Activated CD4-positive, alpha-beta T cell treated with anti-CD3 and anti-CD28 coated beads, Interleukin-2, amount 10 ng/mL, durations not matched to agents 24 days and 14 days (primary cell): ENCODE measurements at regions of chr12 and their contacts with region 1.

Region 1: GRCh38 chr12:109093022-109093918 is at the start of gene ALKBH2:
- DNase-seq: peak; percentile 98
- H3K4me3 Mint-ChIP-seq: peak within 1 kb of the TSS; percentile 82
- H3K27ac Mint-ChIP-seq: peak within 1 kb of the TSS; percentile 84
- H3K4me1 Mint-ChIP-seq: peaks cover 40% of the 10 kb centered on the region
- H3K27me3 Mint-ChIP-seq: no peaks in the 10 kb centered on the region
- total RNA-seq, gene ALKBH2: 44.8 and 46.2 TPM in 2 replicates

Region 2: DNA sequence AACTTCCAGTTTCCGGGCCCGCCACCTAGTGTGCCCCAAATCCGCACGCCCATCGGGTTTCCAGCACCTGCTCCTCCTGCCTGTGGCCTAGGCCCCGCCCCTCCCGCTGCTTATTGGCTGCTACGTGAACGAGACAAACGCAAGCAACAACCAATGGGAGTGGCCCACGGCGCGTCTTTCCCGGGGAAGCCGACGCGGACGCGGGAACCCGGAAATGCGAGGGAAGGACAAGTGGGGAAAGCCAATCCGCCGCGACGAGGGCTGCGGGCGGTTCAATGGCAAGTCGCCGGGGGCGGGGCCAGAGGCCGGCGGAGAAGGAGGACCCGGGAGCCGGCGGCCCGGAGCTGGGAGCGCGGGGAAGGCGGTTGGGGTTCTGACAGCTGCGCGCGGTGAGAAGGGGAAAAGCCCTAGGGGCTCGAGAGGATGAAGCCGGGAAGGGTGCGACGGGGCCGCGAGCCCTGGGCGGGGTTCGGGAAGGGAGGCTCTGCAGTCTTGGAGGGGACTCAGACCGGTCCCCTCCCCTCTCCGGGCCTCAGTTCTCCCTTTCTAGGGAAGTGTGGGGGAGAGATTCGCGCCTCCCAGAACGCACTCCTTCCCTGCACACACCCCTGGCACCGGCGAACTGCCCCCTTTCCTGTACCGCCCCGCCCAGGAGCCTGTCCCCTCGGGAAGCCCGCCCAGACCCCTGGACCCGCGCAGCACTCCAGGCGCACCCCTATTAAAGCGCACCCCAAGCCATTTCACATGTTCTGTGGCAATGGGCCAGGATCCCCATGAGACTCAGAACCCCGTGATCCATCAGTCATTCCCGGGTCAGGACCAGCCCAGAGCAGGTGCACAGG is 578.1 kb before region 1 on chr12 and contains the start of gene FICD:
- intact Hi-C with region 1: loop called (anchors 5 kb)
- DNase-seq: peak; percentile 100
- H3K4me3 Mint-ChIP-seq: peak within 1 kb of the TSS; percentile 94
- H3K27ac Mint-ChIP-seq: peak within 1 kb of the TSS; percentile 84
- H3K4me1 Mint-ChIP-seq: peaks cover 31% of the 10 kb centered on the region
- H3K27me3 Mint-ChIP-seq: no peaks in the 10 kb centered on the region
- total RNA-seq, gene FICD: 5.9 and 6.6 TPM in 2 replicates

Region 3: DNA sequence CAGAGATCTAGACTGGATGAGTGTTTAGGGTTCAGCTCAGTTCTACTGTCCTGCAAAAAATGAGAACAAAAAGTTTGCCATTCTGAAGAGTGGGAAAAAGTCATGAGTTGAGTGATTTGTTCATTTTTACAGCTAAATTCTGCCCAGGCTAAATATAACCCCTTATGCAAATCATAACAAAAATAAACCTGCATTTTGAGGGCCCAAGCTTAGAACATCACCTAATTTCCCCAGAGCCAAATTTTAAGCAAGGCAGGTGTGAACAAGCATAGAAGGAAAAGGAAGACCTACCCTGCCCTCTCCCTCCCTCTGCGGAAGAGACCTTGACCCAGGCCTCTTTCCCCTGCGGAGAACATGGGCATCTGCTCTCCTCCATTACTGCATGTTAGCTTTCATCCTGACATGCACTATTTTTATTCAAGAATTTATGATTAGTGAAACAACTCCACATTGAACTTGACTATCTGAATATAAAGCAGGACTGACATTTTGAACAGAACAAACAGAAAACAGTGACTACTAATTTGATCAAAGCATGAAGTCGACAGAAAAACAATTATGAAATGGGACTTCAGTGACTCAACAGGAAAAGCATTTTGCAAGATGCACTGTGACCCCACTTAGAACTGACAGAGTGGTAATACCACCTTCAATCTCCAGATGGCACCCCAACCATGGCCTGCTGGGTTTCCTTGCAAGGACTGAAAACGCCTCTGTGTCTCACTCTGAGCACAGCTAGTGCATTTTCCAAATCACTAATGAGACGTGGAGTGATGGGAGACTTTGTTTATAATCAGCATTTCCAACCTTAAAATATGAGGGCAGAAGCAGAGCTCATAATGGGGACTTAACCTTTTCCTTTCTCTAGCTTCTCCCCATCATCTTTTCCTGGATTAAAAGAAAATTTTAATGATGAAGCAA is 428.7 kb before region 1 on chr12:
- intact Hi-C with region 1: loop called (anchors 10 kb)
- DNase-seq: peak; percentile 95
- H3K4me3 Mint-ChIP-seq: peak overlapping the region; percentile 58
- H3K27ac Mint-ChIP-seq: peak overlapping the region; percentile 77
- H3K4me1 Mint-ChIP-seq: peaks cover 15% of the 10 kb centered on the region
- H3K27me3 Mint-ChIP-seq: no peaks in the 10 kb centered on the region

Region 4: DNA sequence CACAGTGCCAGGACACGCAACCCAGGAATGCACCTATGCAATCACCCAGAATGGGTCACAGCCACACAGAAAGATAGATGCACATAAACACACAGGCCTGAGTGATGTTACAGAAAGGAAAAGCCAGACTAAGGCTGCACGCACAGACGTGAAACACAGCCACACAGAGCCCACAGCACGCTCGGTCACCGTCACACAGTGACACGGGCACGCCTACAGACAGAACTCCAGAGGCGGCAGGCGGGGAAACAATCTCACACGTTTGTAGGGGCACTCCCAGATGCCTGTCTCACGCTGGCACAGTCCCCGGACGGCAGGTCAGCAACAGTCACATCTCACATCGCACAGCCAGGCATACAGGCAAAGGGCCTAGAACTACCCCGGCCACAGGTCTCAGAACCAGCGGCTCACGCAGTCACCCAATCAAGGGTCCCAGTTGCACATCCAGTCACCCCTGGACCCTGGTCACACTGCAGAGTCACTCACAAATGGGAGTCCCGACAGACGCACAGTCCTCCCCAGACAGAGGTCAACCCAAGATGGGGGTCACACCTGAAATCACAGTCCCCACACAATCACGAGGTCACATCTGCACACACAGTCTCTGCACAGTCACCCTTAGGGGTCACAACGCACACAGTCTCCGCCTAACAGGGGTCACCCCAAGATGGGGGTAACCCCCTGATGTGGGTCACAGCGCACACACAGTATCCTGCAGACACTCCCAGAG is 236.7 kb before region 1 on chr12:
- intact Hi-C with region 1: loop called (anchors 1 kb)
- DNase-seq: peak; percentile 84
- H3K4me3 Mint-ChIP-seq: peak overlapping the region; percentile 91
- H3K27ac Mint-ChIP-seq: peak overlapping the region; percentile 84
- H3K4me1 Mint-ChIP-seq: peaks cover 43% of the 10 kb centered on the region
- H3K27me3 Mint-ChIP-seq: peaks cover 1% of the 10 kb centered on the region

Region 5: DNA sequence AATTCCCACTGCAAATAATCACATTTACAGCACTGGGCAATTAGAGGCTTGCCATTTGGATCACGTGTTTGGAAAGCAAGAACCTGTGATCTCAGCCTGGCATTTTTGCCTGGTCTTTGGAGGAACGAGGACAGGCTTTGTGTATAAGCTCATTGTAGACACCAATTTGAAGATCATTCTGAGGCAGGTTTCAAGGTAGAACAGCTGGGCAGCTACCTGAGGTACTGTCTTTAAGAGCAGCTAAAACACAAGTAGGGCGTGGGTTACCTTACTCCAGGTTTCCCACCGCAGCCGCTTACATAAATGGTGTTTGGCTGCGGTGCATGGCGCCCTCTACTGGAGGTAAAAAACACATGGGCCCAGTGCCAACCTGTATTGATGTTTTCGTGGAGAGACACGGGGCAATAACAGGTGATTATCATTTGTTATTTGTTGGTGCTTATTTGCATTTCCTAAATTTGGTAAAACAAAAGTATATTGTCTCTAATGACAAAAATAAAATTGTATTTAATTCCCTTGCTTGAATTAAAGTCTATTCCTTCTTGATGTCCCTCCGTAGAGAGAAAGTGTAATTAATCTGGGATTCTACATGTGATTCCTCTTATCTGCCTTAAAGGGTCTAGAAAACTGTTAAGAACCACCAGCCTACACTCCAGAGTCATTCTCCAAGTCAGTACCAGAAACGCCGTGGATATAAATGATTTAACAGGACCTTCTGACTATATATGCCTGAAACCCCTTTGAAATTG is 142.1 kb before region 1 on chr12:
- intact Hi-C with region 1: loop called (anchors 2 kb)
- DNase-seq: peak; percentile 90
- H3K4me3 Mint-ChIP-seq: no peak overlapping the region
- H3K27ac Mint-ChIP-seq: no peak overlapping the region
- H3K4me1 Mint-ChIP-seq: no peaks in the 10 kb centered on the region
- H3K27me3 Mint-ChIP-seq: peaks cover 14% of the 10 kb centered on the region

Region 6: GRCh38 chr12:109018296-109018695 is 75.0 kb before region 1 on chr12:
- intact Hi-C with region 1: no loop called
- DNase-seq: no peak
- H3K4me3 Mint-ChIP-seq: no peak overlapping the region
- H3K27ac Mint-ChIP-seq: no peak overlapping the region
- H3K4me1 Mint-ChIP-seq: peaks cover 3% of the 10 kb centered on the region
- H3K27me3 Mint-ChIP-seq: peaks cover 18% of the 10 kb centered on the region

Region 7: GRCh38 chr12:109110988-109111495 is 17.8 kb after region 1 on chr12:
- intact Hi-C with region 1: no loop called
- DNase-seq: peak; percentile 87
- H3K4me3 Mint-ChIP-seq: peak overlapping the region; percentile 75
- H3K27ac Mint-ChIP-seq: peak overlapping the region; percentile 48
- H3K4me1 Mint-ChIP-seq: peaks cover 10% of the 10 kb centered on the region
- H3K27me3 Mint-ChIP-seq: no peaks in the 10 kb centered on the region

Region 8: DNA sequence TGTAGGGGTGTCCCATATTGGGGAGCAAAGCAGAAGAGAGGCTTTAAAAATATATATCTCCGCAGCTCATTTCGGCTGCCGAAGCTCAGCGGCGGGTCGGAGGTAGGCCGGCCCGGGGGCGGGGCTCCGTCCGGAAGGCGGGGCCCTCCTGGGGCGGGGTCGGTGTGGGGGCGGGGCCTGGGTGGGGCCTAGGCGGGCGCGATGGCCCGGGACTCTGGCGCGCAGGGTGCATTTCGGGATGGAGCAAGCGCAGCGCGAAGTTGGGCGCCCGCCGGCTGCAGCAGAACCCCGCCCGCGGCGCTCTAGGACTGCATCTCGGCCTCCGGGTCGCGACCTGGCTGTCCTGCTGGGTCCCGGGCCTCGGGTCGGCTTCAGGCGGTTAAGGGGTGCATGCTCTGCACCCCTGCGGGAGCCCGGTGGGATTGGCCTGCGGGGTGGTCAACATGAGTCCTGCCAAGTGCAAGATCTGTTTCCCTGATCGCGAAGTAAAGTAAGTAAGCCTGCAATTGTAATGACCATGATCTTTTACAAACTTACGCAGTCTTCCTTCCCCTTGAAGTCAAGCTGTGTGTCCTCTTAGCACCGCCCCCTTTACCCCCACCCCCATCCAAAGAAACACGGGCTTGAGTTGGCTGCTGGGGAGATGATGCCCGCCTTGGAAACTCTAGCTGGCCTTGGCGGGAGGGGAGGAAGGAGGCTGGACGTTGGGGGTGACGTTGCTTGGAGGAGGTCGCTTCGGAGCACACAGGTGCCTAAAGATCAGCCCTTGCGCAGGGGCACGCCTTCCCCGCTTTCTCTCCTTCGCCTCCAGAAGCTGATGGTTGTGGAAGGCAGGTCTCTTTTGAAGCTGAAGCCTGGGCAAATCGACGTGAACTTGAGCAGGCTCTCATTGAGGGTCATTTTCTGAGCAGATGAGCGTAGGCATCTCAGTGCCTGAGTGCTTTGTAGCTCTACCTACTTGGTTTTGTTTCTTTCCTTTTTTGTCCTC is 61.5 kb after region 1 on chr12:
- intact Hi-C with region 1: loop called (anchors 2 kb)
- DNase-seq: peak; percentile 93
- H3K4me3 Mint-ChIP-seq: peak overlapping the region; percentile 91
- H3K27ac Mint-ChIP-seq: peak overlapping the region; percentile 85
- H3K4me1 Mint-ChIP-seq: peaks cover 17% of the 10 kb centered on the region
- H3K27me3 Mint-ChIP-seq: peaks cover 13% of the 10 kb centered on the region

Region 9: DNA sequence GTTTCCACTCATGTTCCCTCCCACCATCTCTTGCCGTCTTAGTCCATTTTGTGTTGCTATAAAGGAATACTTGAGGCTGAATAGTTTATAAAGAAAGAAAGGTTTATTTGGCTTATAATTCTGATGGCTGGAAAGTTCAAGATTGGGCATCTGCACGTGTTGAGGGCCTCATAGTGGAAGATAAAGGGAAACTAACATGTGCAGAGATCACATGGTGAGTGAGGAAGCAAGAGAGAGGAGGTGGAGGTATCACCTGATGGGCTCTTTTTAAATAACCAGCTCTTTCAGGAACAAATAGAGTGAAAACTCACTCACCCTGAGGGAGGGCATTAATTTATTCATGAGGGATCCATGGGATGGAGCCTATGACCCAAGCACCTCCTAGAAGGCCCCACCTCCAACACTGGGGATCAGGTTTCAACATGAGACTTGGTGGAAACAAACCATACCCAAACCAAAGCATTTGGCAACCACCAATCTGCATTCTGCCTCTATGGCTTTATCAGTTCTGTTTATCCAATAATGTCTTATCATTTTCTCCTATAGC is 283.9 kb after region 1 on chr12:
- intact Hi-C with region 1: no loop called
- DNase-seq: no peak
- H3K4me3 Mint-ChIP-seq: no peak overlapping the region
- H3K27ac Mint-ChIP-seq: no peak overlapping the region
- H3K4me1 Mint-ChIP-seq: no peaks in the 10 kb centered on the region
- H3K27me3 Mint-ChIP-seq: peaks cover 42% of the 10 kb centered on the region